ENCODE measurements at regions of chr4 and their contacts with region 1.

Region 1: GRCh38 chr4:102430461-102430910 is 70.7 kb upstream of the NFKB1 start:
- DNase-seq: no peak
- CTCF ChIP-seq: no peak

Region 2: GRCh38 chr4:102174800-102175199 is 255.7 kb before region 1 on chr4:
- CTCF ChIA-PET with region 1: no interaction called
- POLR2A ChIA-PET with region 1: no interaction called
- DNase-seq: no peak
- CTCF ChIP-seq: no peak

Region 3: DNA sequence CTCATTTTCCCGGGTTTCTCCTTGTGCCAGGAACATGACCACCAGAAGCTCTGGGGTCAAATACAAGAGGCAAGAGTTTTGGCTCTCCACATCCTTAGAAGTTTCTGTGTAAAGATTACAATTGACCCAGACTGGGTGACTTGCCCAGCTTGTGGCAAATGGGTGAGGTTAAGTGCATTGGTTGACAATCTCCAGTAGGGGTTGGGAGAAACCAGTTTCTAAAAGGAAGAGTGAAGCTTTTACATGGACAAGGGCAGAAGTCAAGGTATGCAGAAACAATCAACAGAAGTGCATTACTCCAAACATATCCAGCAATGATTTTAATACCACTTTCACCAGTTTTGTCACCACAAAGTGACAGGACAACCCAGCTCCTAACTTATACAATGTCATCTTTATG is 175.0 kb before region 1 on chr4:
- CTCF ChIA-PET with region 1: interaction called, 10 read pairs
- POLR2A ChIA-PET with region 1: no interaction called
- DNase-seq: no peak
- CTCF ChIP-seq: no peak

Region 4: DNA sequence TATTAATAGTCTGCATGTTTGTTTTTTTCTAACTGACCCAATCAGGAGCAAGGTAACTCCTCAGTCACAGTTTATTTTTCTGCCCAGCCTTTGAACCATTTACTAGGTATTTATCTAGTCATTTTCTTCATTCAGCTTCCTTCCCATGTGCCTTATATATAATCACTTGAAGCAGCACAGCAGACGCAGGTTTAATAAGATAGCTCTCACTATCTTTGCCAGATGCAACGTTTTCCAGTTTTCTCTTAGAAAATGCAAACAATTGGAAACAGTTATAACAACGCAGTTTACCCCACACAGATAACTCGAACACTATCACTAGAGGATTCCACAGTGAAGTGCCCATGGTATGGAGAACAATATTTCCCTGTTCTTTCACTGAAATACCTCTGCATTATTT is 14.3 kb after region 1 on chr4:
- CTCF ChIA-PET with region 1: interaction called, 13 read pairs
- POLR2A ChIA-PET with region 1: no interaction called
- DNase-seq: no peak
- CTCF ChIP-seq: no peak

Measured in GM10248 (cell line).